Gastrocnemius medialis (tissue), 4 donors: ENCODE measurements at regions of chr15 and their contacts with region 1.

Region 1: GRCh38 chr15:90716976-90717821 is at the start of gene BLM:
- DNase-seq: peak; percentile 96 to 97
- ATAC-seq: peak; percentile 91 to 98
- H3K4me3 ChIP-seq: peak within 1 kb of the TSS; percentile 75 to 79 (median 76)
- H3K27ac ChIP-seq: peak within 1 kb of the TSS; percentile 90 to 95 (median 92)
- H3K4me1 ChIP-seq: peaks cover 9 to 17% of the 10 kb centered on the region in 2 donors
- H3K27me3 ChIP-seq: no peaks in the 10 kb centered on the region
- CTCF ChIP-seq: peak; percentile 38 to 70 (median 57)
- POLR2A ChIP-seq: peak; percentile 44 to 69
- total RNA-seq, gene BLM: 11.6 to 18.2 (median 14.5) TPM

Region 2: GRCh38 chr15:90660195-90660998 is 56.8 kb before region 1 on chr15:
- in situ Hi-C with region 1: no loop called
- intact Hi-C with region 1: loop called (anchors 2 kb)
- DNase-seq: peak; percentile 89 to 91
- ATAC-seq: peak; percentile 84 to 85
- H3K4me3 ChIP-seq: peak overlapping the region; percentile 31 to 58 (median 55)
- H3K27ac ChIP-seq: peak overlapping the region; percentile 92 to 100 (median 98)
- H3K4me1 ChIP-seq: peaks cover 34 to 51% of the 10 kb centered on the region in 2 donors
- H3K27me3 ChIP-seq: no peaks in the 10 kb centered on the region
- CTCF ChIP-seq: no peak
- POLR2A ChIP-seq: peak; percentile 46 to 75

Region 3: GRCh38 chr15:90762109-90762508 is 44.9 kb after region 1 on chr15:
- in situ Hi-C with region 1: no loop called
- intact Hi-C with region 1: loop called (anchors 2 kb)
- DNase-seq: peak; percentile 89 to 96
- ATAC-seq: peak; percentile 97 to 98
- H3K4me3 ChIP-seq: peak overlapping the region in 1 of 4 donors; percentile 22
- H3K27ac ChIP-seq: peak overlapping the region; percentile 76 to 90 (median 82)
- H3K4me1 ChIP-seq: peaks cover 0 to 24% of the 10 kb centered on the region in 2 donors
- H3K27me3 ChIP-seq: no peaks in the 10 kb centered on the region
- CTCF ChIP-seq: no peak
- POLR2A ChIP-seq: peak; percentile 52 to 77

Region 4: GRCh38 chr15:90869601-90870353 is 152.6 kb after region 1 on chr15:
- in situ Hi-C with region 1: no loop called
- intact Hi-C with region 1: loop called (anchors 2 kb)
- DNase-seq: peak; percentile 56 to 66
- ATAC-seq: peak; percentile 22 to 42
- H3K4me3 ChIP-seq: peak overlapping the region in 1 of 4 donors; percentile 79
- H3K27ac ChIP-seq: peak overlapping the region; percentile 93 to 98 (median 96)
- H3K4me1 ChIP-seq: peaks cover 30 to 42% of the 10 kb centered on the region in 2 donors
- H3K27me3 ChIP-seq: no peaks in the 10 kb centered on the region
- CTCF ChIP-seq: no peak
- POLR2A ChIP-seq: peak; percentile 16 to 39

Region 5: GRCh38 chr15:90886041-90886614 is 168.9 kb after region 1 on chr15:
- in situ Hi-C with region 1: loop called in 2 of 4 experiments (anchors 25 kb)
- intact Hi-C with region 1: no loop called
- DNase-seq: peak; percentile 42 to 63
- ATAC-seq: peak; percentile 60 to 62
- H3K4me3 ChIP-seq: peak overlapping the region in 3 of 4 donors; percentile 57 to 62 (median 61)
- H3K27ac ChIP-seq: peak overlapping the region; percentile 86 to 90 (median 88)
- H3K4me1 ChIP-seq: peaks cover 7 to 8% of the 10 kb centered on the region in 2 donors
- H3K27me3 ChIP-seq: no peaks in the 10 kb centered on the region
- CTCF ChIP-seq: peak; percentile 97 to 99 (median 98)
- POLR2A ChIP-seq: no peak

Region 6: GRCh38 chr15:90931737-90932659 is 214.8 kb after region 1 on chr15 and contains the start of gene HDDC3:
- in situ Hi-C with region 1: no loop called
- intact Hi-C with region 1: loop called (anchors 5 kb)
- DNase-seq: peak; percentile 72 to 86
- ATAC-seq: peak; percentile 49 to 65
- H3K4me3 ChIP-seq: peak within 1 kb of the TSS; percentile 66 to 92 (median 87)
- H3K27ac ChIP-seq: peak within 1 kb of the TSS; percentile 84 to 95 (median 89)
- H3K4me1 ChIP-seq: peaks cover 47 to 48% of the 10 kb centered on the region in 2 donors
- H3K27me3 ChIP-seq: no peaks in the 10 kb centered on the region
- CTCF ChIP-seq: peak; percentile 91 to 95 (median 92)
- POLR2A ChIP-seq: peak; percentile 34 to 69
- total RNA-seq, gene HDDC3: 13.4 to 22.2 (median 17.2) TPM